Activated T-helper 1 cell treated with anti-CD3 and anti-CD28 coated beads, Interleukin-12 subunit alpha, Interleukin-12 subunit beta, Interleukin-2, Interleukin-4 antibody, amounts not matched to agents 30 ng/mL and 10 ng/mL and 1 ng/mL, durations not matched to agents 14 hours and 24 hours and 36 hours (primary cell): ENCODE measurements at regions of chr6 and their contacts with region 1.

Region 1: DNA sequence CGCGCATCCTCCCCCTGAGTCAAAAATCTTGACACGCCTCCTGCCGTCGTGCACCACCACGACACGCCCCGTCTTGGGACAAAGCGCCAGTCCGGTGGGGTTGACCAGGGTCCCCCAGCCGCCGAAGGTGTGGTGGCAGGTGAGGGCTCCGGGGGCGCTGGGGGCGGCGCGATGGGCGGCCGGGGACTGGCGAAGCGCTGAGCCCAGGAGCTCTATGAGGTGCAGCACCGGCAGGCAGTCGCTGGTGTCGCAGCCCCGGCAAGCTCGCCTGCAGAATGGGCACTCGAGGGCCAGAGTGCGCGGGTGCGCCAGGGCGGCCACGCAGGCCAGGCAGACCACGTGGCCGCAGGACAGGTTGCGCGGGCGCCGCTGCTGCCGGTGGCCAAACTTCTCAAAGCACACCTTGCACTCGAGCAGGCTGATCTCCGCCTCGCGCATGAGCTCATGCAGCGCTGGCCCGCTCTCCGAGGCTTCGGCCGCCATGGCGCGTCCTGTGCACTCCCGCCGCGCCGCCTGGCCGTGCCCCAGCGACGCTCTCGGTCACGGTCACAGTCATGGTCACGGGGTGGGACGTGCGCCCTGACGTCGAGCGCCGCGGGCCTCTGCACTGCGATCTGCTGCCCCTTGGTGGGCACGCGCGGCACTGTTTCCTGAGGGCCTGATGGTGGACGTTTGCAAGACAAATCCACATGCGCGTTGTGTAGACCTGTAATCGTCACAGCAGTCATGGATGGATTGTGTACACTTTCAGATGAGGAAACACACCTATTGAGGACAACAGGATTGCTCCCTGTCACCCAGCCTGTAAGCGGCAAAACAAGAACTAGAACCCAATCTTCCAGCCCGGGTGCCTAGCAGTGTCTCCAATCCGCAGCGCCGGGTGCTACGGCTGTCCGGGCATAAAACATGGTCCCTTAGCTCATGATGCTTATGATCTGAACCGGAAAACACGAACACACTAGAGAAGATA is at the start of gene NHLRC1:
- DNase-seq: peak; percentile 62
- H3K4me3 Mint-ChIP-seq: peak within 1 kb of the TSS; percentile 72
- H3K27ac Mint-ChIP-seq: peak within 1 kb of the TSS; percentile 62
- H3K4me1 Mint-ChIP-seq: peaks cover 8% of the 10 kb centered on the region
- H3K27me3 Mint-ChIP-seq: peaks cover 54% of the 10 kb centered on the region
- total RNA-seq, gene NHLRC1: 0.23 and 0.24 TPM in 2 replicates

Region 2: GRCh38 chr6:17584241-17584803 is 538.1 kb before region 1 on chr6:
- intact Hi-C with region 1: loop called (anchors 5 kb)
- DNase-seq: no peak
- H3K4me3 Mint-ChIP-seq: no peak overlapping the region
- H3K27ac Mint-ChIP-seq: no peak overlapping the region
- H3K4me1 Mint-ChIP-seq: peaks cover 20% of the 10 kb centered on the region
- H3K27me3 Mint-ChIP-seq: peaks cover 9% of the 10 kb centered on the region

Region 3: DNA sequence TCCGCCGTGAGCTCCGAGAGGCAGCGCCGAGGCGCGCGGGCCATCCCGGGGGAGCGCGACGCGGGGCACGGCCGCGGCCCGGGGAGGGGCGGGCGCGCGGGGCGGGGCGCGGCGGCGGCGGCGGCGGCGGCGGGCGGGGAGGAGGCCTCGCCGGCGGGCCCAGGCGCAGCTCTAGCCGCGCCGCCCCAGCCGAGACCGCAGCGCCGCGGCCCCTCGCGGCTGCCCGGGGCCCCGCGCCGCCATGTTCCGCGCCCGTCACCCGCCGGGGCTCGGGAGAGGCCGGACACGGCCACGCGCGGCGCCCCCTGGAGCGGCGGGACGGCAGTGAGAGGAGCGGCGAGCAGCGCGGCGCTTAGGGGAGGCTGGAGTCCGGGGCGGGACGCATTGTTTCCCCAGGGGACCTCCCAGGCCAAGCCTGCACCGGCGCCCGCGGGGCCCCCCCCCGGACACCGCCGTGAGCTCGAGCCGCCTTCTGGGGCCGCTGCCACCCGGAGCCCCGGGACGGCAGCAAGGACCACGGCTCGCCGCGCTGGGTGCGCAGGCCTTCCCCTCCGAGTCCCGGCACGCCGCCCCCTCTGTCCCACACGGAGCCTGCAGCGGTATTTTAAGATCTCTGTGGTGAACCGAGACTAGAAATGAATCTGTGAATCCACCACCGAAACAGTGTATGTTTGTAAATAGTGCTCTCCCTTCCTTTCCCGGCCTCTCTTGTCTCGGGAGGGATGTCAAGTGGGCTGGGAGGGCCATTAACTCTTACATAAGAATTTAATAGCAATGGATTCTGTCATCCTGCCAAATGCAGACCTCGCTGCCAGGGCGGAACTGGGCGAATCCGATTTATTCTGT is 134.6 kb before region 1 on chr6 and contains the start of gene KIF13A:
- intact Hi-C with region 1: loop called (anchors 2 kb)
- DNase-seq: peak; percentile 5
- H3K4me3 Mint-ChIP-seq: peak within 1 kb of the TSS; percentile 85
- H3K27ac Mint-ChIP-seq: no peak within 1 kb of the TSS
- H3K4me1 Mint-ChIP-seq: peaks cover 9% of the 10 kb centered on the region
- H3K27me3 Mint-ChIP-seq: peaks cover 64% of the 10 kb centered on the region
- total RNA-seq, gene KIF13A: not detected in 2 replicates

Region 4: GRCh38 chr6:18264219-18264922 is 142.0 kb after region 1 on chr6 and contains the start of gene DEK:
- intact Hi-C with region 1: loop called (anchors 2 kb)
- DNase-seq: peak; percentile 77
- H3K4me3 Mint-ChIP-seq: peak within 1 kb of the TSS; percentile 87
- H3K27ac Mint-ChIP-seq: peak within 1 kb of the TSS; percentile 91
- H3K4me1 Mint-ChIP-seq: peaks cover 48% of the 10 kb centered on the region
- H3K27me3 Mint-ChIP-seq: peaks cover 4% of the 10 kb centered on the region
- total RNA-seq, gene DEK: 163 and 170 TPM in 2 replicates